Sciatic nerve (tissue), 2 donors: ENCODE measurements at regions of chr17 and their contacts with region 1.

Region 1: GRCh38 chr17:49851387-49852291 is 3.8 kb upstream of the TAC4 start:
- DNase-seq: peak; percentile 89
- ATAC-seq: peak; percentile 74

Region 2: DNA sequence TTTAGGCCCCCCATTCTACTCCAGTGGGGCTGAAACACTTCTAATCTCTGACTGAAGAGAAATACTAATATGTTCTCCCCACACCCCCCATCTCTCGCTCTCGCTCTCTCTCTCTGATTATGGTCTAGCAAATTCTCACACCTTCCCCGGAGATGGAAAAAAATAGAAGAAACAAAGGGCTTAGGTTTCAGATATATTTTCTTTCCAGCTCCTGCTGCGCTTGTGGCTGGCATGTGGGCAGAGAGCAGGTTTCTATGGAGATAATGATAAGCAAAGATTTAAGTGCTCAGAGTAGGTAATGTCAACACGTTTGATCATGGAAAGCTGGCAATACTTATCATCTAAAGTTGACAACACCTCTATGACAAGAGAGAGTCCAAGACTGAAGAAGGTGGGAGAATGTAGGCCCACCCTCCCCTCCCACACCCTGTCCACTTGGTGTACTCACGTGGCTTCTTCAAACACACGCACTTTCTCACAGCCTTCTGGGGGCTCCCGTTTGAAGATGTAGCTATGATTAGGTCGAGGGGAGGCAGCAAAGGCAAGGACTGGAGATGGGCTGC is 135.8 kb before region 1 on chr17:
- intact Hi-C with region 1: loop called (anchors 10 kb)
- DNase-seq: no peak
- ATAC-seq: no peak

Region 3: DNA sequence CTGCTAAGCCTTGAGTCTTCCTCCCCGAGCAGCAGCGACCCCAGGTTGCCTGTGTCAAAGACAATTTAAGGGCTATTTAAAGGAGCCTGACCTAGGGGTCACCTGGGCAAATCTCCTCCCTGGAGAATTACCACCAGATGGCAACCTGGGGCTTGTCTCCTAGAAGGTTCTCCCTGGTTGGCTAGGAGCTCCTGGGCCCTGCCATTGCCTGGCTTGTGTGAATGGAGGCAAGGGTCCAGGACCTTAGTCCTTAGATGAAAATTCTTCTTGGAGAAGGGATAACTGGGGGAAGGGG is 47.5 kb after region 1 on chr17:
- intact Hi-C with region 1: no loop called
- DNase-seq: no peak
- ATAC-seq: no peak